Gastrocnemius medialis (tissue), 4 donors: ENCODE measurements at regions of chr9 and their contacts with region 1.

Region 1: GRCh38 chr9:33290247-33291030 is at the start of gene NFX1:
- DNase-seq: peak; percentile 96 to 99
- ATAC-seq: peak; percentile 83 to 88
- H3K4me3 ChIP-seq: peak within 1 kb of the TSS; percentile 69 to 90 (median 76)
- H3K27ac ChIP-seq: peak within 1 kb of the TSS; percentile 93 to 100 (median 94)
- H3K4me1 ChIP-seq: peaks cover 48 to 52% of the 10 kb centered on the region in 2 donors
- H3K27me3 ChIP-seq: no peaks in the 10 kb centered on the region
- CTCF ChIP-seq: peak in 1 of 5 experiments; percentile 17
- POLR2A ChIP-seq: peak; percentile 87 to 89
- total RNA-seq, gene NFX1: 29.8 to 52.0 (median 40.6) TPM

Region 2: GRCh38 chr9:32986971-32987370 is 303.5 kb before region 1 on chr9:
- in situ Hi-C with region 1: no loop called
- intact Hi-C with region 1: no loop called
- DNase-seq: no peak
- ATAC-seq: no peak
- H3K4me3 ChIP-seq: no peak overlapping the region
- H3K27ac ChIP-seq: no peak overlapping the region
- H3K4me1 ChIP-seq: no peaks in the 10 kb centered on the region
- H3K27me3 ChIP-seq: no peaks in the 10 kb centered on the region
- CTCF ChIP-seq: no peak
- POLR2A ChIP-seq: no peak

Region 3: GRCh38 chr9:33320568-33321261 is 30.3 kb after region 1 on chr9:
- in situ Hi-C with region 1: no loop called
- intact Hi-C with region 1: loop called (anchors 2 kb)
- DNase-seq: peak; percentile 33 to 50
- ATAC-seq: peak; percentile 95 to 96
- H3K4me3 ChIP-seq: peak overlapping the region in 1 of 4 donors; percentile 11
- H3K27ac ChIP-seq: peak overlapping the region; percentile 81 to 87 (median 83)
- H3K4me1 ChIP-seq: peaks cover 26 to 28% of the 10 kb centered on the region in 2 donors
- H3K27me3 ChIP-seq: no peaks in the 10 kb centered on the region
- CTCF ChIP-seq: no peak
- POLR2A ChIP-seq: no peak

Region 4: GRCh38 chr9:33340186-33340585 is 49.7 kb after region 1 on chr9:
- in situ Hi-C with region 1: no loop called
- intact Hi-C with region 1: no loop called
- DNase-seq: no peak
- ATAC-seq: no peak
- H3K4me3 ChIP-seq: no peak overlapping the region
- H3K27ac ChIP-seq: no peak overlapping the region
- H3K4me1 ChIP-seq: no peaks in the 10 kb centered on the region
- H3K27me3 ChIP-seq: no peaks in the 10 kb centered on the region
- CTCF ChIP-seq: no peak
- POLR2A ChIP-seq: no peak

Region 5: GRCh38 chr9:33374634-33375213 is 84.3 kb after region 1 on chr9:
- in situ Hi-C with region 1: no loop called
- intact Hi-C with region 1: loop called (anchors 5 kb)
- DNase-seq: peak; percentile 53 to 70
- ATAC-seq: peak; percentile 78 to 83
- H3K4me3 ChIP-seq: peak overlapping the region in 3 of 4 donors; percentile 12 to 26 (median 26)
- H3K27ac ChIP-seq: peak overlapping the region; percentile 54 to 73 (median 64)
- H3K4me1 ChIP-seq: peaks cover 17 to 26% of the 10 kb centered on the region in 2 donors
- H3K27me3 ChIP-seq: no peaks in the 10 kb centered on the region
- CTCF ChIP-seq: peak; percentile 78 to 85 (median 81)
- POLR2A ChIP-seq: no peak

Region 6: DNA sequence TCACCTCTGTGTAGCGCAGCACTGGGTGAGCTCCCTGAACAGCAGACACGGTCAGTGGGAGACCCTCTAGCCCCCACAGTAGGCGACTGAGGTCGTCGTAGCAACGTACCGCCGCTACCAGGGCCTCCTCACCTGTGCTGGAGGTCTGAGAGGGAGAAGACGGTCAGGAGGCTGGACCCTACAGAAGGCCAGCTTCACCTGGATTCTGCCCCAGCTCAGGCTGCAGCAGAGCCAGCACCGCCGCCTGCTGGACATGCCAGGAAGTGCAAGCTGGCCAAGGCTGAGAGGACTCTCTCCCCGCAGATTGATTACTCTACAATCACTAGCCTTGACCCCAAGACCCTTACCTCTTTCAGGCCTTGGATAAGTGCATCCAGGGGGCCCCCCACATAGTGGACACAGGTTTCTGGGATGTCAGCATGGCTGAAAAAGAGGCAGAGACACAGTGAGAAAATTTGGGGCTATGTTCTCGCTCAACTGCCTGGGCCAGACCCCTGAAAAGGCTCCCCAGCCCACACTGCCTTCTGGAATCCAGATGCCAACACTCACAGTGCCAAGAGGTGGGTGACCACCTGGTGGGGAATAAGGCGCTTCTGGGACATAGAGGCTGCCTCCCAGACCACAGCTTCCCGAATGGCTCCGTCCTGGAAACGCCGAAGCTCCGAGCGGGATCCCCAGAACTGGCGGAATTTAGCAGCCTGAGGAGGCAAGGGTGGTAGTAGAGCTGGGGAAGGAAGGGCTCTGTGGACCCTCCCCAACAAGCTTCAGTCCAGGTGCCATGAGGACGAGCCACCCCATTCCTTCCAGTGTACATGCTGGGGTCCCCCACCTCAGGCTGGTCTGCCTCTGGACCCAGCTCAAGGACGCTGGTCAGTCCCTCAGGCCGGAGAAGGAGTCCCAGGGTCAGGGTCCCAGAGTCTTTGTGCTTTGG is 176.4 kb after region 1 on chr9:
- in situ Hi-C with region 1: loop called in 2 of 4 experiments (anchors 10 to 25 kb)
- intact Hi-C with region 1: loop called (anchors 5 kb)
- DNase-seq: peak in 1 of 2 donors; percentile 42
- ATAC-seq: peak in 1 of 2 donors; percentile 77
- H3K4me3 ChIP-seq: no peak overlapping the region
- H3K27ac ChIP-seq: no peak overlapping the region
- H3K4me1 ChIP-seq: no peaks in the 10 kb centered on the region
- H3K27me3 ChIP-seq: no peaks in the 10 kb centered on the region
- CTCF ChIP-seq: peak; percentile 86 to 90 (median 89)
- POLR2A ChIP-seq: no peak